CD8-positive, alpha-beta memory T cell (primary cell): ENCODE measurements at regions of chr1 and their contacts with region 1.

Region 1: GRCh38 chr1:204190212-204191211 is 5.8 kb downstream of the KISS1 start:
- DNase-seq: peak in 2 of 5 donors; percentile 18 to 35
- H3K4me3 ChIP-seq: no peak overlapping the region
- H3K4me3 Mint-ChIP-seq: peak overlapping the region in 6 of 7 donors; percentile 4 to 61 (median 50)
- H3K27ac ChIP-seq: no peak overlapping the region
- H3K27ac Mint-ChIP-seq: peak overlapping the region in 3 of 8 donors; percentile 72 to 89 (median 77)
- H3K4me1 ChIP-seq: no peaks in the 10 kb centered on the region
- H3K4me1 Mint-ChIP-seq: peaks cover 14 to 31% (median 22%) of the 10 kb centered on the region in 3 donors
- H3K27me3 ChIP-seq: peaks cover 20% of the 10 kb centered on the region
- H3K27me3 Mint-ChIP-seq: peaks cover 40 to 68% of the 10 kb centered on the region in 2 donors

Region 2: DNA sequence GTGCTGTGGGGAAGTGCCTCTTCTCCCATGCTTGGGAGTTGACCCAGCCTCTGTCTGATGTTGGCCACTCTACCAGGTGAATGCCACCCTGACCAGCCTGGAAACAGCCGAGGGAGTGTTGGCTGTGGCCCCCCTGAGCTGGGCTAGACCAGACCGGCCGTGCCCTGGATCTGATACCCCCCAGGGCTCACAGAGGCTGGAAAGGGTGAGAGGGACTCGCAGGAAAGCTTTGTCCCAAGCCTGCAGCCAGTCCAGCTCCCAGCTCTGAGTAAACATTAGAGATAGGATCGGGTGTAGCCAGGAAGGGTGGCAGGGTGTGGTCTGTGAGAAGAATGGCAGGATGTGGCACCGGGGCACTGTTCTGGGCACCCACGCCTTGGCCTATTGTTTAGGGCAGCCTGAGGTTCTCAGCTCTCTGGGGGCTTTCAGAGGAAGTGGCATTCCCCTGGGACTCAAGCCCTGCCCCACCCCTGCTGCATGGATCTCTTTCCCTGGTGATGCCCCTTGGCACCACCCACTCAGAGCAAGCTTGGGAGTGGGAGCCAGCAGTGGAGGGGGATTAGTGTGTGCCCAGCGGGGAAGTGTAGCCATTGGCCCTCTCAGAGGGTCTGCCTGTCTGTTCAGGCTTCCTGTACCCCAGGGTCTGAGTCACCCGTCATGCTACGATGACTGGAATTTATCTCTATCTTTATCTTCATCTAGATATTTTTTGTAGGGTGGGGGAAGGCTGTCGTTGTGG is 86.2 kb before region 1 on chr1:
- CTCF ChIA-PET with region 1: no interaction called
- POLR2A ChIA-PET with region 1: no interaction called
- DNase-seq: peak in 1 of 5 donors; percentile 25
- H3K4me3 ChIP-seq: no peak overlapping the region
- H3K4me3 Mint-ChIP-seq: peak overlapping the region in 6 of 7 donors; percentile 44 to 89 (median 71)
- H3K27ac ChIP-seq: peak overlapping the region; percentile 54
- H3K27ac Mint-ChIP-seq: peak overlapping the region; percentile 74 to 98 (median 92)
- H3K4me1 ChIP-seq: peaks cover 42% of the 10 kb centered on the region
- H3K4me1 Mint-ChIP-seq: peaks cover 45 to 60% (median 54%) of the 10 kb centered on the region in 3 donors
- H3K27me3 ChIP-seq: no peaks in the 10 kb centered on the region
- H3K27me3 Mint-ChIP-seq: no peaks in the 10 kb centered on the region

Region 3: GRCh38 chr1:204207136-204207616 is 16.7 kb after region 1 on chr1:
- CTCF ChIA-PET with region 1: interaction called, 15 read pairs
- POLR2A ChIA-PET with region 1: no interaction called
- DNase-seq: peak; percentile 50 to 70 (median 61)
- H3K4me3 ChIP-seq: no peak overlapping the region
- H3K4me3 Mint-ChIP-seq: no peak overlapping the region
- H3K27ac ChIP-seq: no peak overlapping the region
- H3K27ac Mint-ChIP-seq: no peak overlapping the region
- H3K4me1 ChIP-seq: peaks cover 5% of the 10 kb centered on the region
- H3K4me1 Mint-ChIP-seq: peaks cover 0 to 4% (median 0%) of the 10 kb centered on the region in 3 donors
- H3K27me3 ChIP-seq: peaks cover 3% of the 10 kb centered on the region
- H3K27me3 Mint-ChIP-seq: peaks cover 32 to 69% of the 10 kb centered on the region in 2 donors

Region 4: GRCh38 chr1:204241050-204241449 is 50.5 kb after region 1 on chr1:
- CTCF ChIA-PET with region 1: no interaction called
- POLR2A ChIA-PET with region 1: no interaction called
- DNase-seq: no peak
- H3K4me3 ChIP-seq: no peak overlapping the region
- H3K4me3 Mint-ChIP-seq: no peak overlapping the region
- H3K27ac ChIP-seq: no peak overlapping the region
- H3K27ac Mint-ChIP-seq: no peak overlapping the region
- H3K4me1 ChIP-seq: no peaks in the 10 kb centered on the region
- H3K4me1 Mint-ChIP-seq: no peaks in the 10 kb centered on the region
- H3K27me3 ChIP-seq: no peaks in the 10 kb centered on the region
- H3K27me3 Mint-ChIP-seq: peaks cover 1 to 13% of the 10 kb centered on the region in 2 donors